ENCODE measurements at regions of chr14 and their contacts with region 1.

Region 1: GRCh38 chr14:35814371-35815005 is 5.4 kb upstream of the RALGAPA1 start:
- DNase-seq: peak; percentile 37
- ATAC-seq: peak; percentile 90
- H3K4me3 Mint-ChIP-seq: no peak overlapping the region
- H3K27ac Mint-ChIP-seq: no peak overlapping the region
- H3K4me1 Mint-ChIP-seq: peaks cover 4% of the 10 kb centered on the region
- H3K27me3 Mint-ChIP-seq: no peaks in the 10 kb centered on the region
- CTCF ChIP-seq: peak; percentile 56

Region 2: GRCh38 chr14:35140718-35141581 is 673.5 kb before region 1 on chr14:
- CTCF ChIA-PET with region 1: interaction called, 3 read pairs
- POLR2A ChIA-PET with region 1: no interaction called
- intact Hi-C with region 1: loop called (anchors 2 kb)
- DNase-seq: no peak
- ATAC-seq: no peak
- H3K4me3 Mint-ChIP-seq: no peak overlapping the region
- H3K27ac Mint-ChIP-seq: no peak overlapping the region
- H3K4me1 Mint-ChIP-seq: peaks cover 2% of the 10 kb centered on the region
- H3K27me3 Mint-ChIP-seq: no peaks in the 10 kb centered on the region
- CTCF ChIP-seq: peak; percentile 58

Region 3: DNA sequence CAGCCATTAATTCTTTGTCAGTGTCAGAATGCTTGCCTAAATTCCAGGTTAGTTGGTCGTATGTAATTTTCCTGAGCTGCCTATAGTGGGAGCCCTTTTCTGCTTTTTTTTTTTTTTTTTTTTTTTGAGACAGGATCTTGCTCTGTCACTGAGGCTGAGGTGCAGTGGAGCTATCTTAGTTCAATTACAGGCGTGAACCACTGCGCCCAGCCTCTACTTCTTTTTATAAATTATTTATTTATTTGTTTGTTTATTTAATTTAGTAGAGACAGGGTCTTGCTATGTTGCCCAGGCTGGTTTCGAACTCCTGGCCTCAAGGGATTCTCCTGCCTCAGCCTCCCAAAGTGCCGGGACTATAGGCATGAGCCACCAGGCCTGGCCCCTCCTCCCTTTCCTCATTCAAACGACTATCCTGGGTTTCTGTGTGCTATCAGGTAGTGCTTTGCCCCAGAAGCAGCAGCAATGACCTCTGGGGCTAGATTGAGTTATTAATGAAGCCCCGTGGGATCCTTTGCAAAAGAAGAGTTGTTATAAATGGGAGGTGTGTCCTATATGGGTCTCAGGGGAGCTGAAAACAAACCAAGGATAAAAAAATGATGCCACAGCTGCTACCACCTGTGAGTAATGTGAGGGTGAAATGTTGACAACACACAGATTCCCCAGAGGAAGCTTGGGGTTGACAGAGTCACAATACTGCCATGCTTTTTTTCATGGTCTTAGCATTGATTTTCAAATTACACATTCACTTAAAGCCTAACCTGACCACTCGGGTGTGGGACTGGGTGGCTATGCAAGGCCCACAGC is 375.4 kb before region 1 on chr14:
- CTCF ChIA-PET with region 1: no interaction called
- POLR2A ChIA-PET with region 1: no interaction called
- intact Hi-C with region 1: loop called (anchors 5 kb)
- DNase-seq: no peak
- ATAC-seq: peak; percentile 93
- H3K4me3 Mint-ChIP-seq: no peak overlapping the region
- H3K27ac Mint-ChIP-seq: no peak overlapping the region
- H3K4me1 Mint-ChIP-seq: peaks cover 10% of the 10 kb centered on the region
- H3K27me3 Mint-ChIP-seq: peaks cover 3% of the 10 kb centered on the region
- CTCF ChIP-seq: no peak

Region 4: GRCh38 chr14:35715079-35715478 is 99.4 kb before region 1 on chr14:
- CTCF ChIA-PET with region 1: no interaction called
- POLR2A ChIA-PET with region 1: no interaction called
- intact Hi-C with region 1: no loop called
- DNase-seq: no peak
- ATAC-seq: no peak
- H3K4me3 Mint-ChIP-seq: no peak overlapping the region
- H3K27ac Mint-ChIP-seq: no peak overlapping the region
- H3K4me1 Mint-ChIP-seq: no peaks in the 10 kb centered on the region
- H3K27me3 Mint-ChIP-seq: no peaks in the 10 kb centered on the region
- CTCF ChIP-seq: no peak

Region 5: DNA sequence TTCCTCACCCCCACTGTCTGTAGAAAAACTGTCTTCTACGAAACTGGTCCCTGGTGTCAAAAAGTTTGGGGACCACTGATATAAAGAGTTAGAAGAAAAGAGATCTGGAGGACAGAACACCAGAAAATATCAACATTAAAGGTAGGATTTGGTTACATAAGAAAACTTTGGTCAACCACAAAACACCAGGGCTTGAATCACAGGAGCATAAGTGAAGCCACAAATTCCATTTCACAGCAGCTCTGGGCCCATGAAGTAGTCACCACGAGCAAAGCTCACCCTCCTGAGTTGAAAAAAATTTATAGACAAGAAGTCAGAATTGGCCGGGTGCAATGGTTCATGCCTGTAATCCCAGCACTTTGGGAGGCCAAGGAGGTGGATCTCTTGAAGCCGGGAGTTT is 24.8 kb before region 1 on chr14:
- CTCF ChIA-PET with region 1: no interaction called
- POLR2A ChIA-PET with region 1: no interaction called
- intact Hi-C with region 1: no loop called
- DNase-seq: no peak
- ATAC-seq: no peak
- H3K4me3 Mint-ChIP-seq: no peak overlapping the region
- H3K27ac Mint-ChIP-seq: no peak overlapping the region
- H3K4me1 Mint-ChIP-seq: no peaks in the 10 kb centered on the region
- H3K27me3 Mint-ChIP-seq: no peaks in the 10 kb centered on the region
- CTCF ChIP-seq: no peak